Activated naive CD4-positive, alpha-beta T cell treated with anti-CD3 and anti-CD28 coated beads for 36 hours (primary cell): ENCODE measurements at regions of chr12 and their contacts with region 1.

Region 1: GRCh38 chr12:92570056-92570753 is 132.6 kb upstream of the PLEKHG7 start:
- DNase-seq: peak; percentile 67
- H3K4me3 Mint-ChIP-seq: no peak overlapping the region
- H3K27ac Mint-ChIP-seq: no peak overlapping the region
- H3K4me1 Mint-ChIP-seq: peaks cover 32% of the 10 kb centered on the region
- H3K27me3 Mint-ChIP-seq: no peaks in the 10 kb centered on the region

Region 2: DNA sequence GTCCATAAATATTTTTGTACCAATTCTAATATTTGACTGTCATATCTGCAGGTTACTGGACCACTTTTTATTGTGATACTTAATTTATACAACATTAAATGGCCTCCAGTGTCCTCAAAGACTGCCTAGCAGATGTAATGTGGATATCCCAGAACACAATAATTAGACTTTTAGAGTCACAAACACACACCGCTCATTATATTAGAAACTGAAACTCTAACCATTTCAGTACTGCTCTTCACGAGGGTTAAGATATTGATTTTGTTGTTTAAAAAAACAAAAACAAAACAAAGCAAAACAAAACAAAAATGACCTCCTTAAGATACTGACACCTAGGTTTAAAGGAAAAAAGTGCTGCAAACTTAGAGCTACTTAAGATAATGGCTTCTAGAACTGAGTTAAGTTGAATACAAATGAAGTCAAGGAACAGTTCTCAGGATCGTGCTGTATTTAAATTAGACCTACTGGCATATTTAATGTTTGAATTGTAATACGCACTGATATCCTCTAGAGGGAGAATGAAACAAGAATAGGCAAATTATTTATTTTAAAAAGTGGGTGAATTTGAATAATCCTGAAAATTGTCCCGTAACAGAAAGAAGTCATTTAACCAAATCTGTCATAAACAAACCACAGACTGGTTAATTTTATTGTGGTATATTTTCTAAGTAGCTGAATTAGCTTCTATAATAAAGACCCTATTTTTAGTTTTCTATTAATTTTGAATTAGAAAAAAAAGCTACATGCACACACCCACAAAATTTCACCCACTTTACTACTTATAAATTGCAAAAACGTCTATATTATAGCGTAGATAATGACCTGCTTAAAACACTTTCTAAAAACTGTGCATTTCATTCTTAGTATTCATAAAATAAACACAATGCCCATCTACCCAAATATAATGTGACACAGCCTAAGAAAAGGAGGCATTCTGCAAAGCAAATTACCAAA is 992.3 kb before region 1 on chr12:
- CTCF ChIA-PET with region 1: no interaction called
- intact Hi-C with region 1: loop called (anchors 1 kb)
- DNase-seq: no peak
- H3K4me3 Mint-ChIP-seq: peak overlapping the region; percentile 71
- H3K27ac Mint-ChIP-seq: peak overlapping the region; percentile 61
- H3K4me1 Mint-ChIP-seq: peaks cover 19% of the 10 kb centered on the region
- H3K27me3 Mint-ChIP-seq: no peaks in the 10 kb centered on the region

Region 3: DNA sequence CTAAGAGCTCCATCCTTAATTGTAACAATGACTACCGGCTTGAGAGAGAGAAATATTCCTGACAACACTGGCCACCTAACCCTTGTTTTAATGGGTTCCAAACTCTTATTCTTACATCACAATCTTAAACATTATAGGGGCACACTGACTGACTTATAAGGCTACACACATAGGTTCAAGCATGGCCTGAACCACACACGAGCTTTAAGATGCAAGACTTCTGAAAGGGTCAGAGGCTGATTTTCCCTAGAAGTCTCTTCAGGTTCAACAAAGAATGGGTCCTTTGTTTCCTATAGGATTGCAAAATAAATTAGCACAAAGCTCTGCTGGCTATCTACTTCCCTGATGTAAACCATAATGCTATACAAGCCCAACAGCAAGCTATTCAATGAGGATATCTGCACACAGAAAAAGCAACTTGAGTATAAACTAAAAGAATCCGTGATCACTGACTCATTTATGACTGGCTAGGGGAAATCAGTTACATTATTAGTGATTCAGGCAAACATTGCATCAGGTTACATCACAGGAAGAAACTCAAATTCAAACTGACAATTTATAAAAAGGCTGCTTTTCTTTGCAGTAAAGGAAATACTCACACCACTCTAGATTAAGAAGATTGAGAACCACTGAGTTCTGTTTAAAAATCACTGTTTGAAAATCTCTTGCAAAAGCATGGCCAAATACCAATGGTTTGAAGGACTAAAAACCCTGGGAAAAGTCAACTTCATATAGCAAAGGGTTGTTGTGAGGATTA is 433.1 kb before region 1 on chr12:
- CTCF ChIA-PET with region 1: interaction called, 3 read pairs
- intact Hi-C with region 1: loop called (anchors 2 kb)
- DNase-seq: no peak
- H3K4me3 Mint-ChIP-seq: peak overlapping the region; percentile 100
- H3K27ac Mint-ChIP-seq: peak overlapping the region; percentile 99
- H3K4me1 Mint-ChIP-seq: peaks cover 58% of the 10 kb centered on the region
- H3K27me3 Mint-ChIP-seq: no peaks in the 10 kb centered on the region

Region 4: DNA sequence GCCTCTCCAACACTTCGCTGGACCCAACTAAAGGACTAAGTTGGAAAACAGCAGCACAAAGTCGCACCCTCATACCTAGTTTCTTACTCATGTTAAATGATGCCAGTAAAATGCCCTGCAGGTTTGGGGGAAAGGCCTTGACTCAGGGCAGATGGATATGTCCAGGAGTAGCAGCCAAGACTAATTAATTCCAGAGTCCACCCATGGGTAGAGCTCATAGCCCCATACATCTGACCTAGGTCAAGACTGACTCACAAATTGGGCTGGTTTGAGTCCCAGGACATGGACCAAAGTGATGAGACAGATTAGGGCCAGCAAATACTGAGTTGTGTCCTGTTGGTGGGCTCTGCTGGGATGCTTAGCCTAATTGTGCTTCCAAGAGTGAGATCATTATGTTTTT is 200.6 kb before region 1 on chr12:
- CTCF ChIA-PET with region 1: no interaction called
- intact Hi-C with region 1: no loop called
- DNase-seq: no peak
- H3K4me3 Mint-ChIP-seq: no peak overlapping the region
- H3K27ac Mint-ChIP-seq: no peak overlapping the region
- H3K4me1 Mint-ChIP-seq: peaks cover 41% of the 10 kb centered on the region
- H3K27me3 Mint-ChIP-seq: no peaks in the 10 kb centered on the region

Region 5: GRCh38 chr12:92396647-92397252 is 173.5 kb before region 1 on chr12:
- CTCF ChIA-PET with region 1: interaction called, 4 read pairs
- intact Hi-C with region 1: loop called (anchors 1 kb)
- DNase-seq: peak; percentile 39
- H3K4me3 Mint-ChIP-seq: no peak overlapping the region
- H3K27ac Mint-ChIP-seq: peak overlapping the region; percentile 73
- H3K4me1 Mint-ChIP-seq: peaks cover 97% of the 10 kb centered on the region
- H3K27me3 Mint-ChIP-seq: no peaks in the 10 kb centered on the region

Region 6: GRCh38 chr12:92539113-92539749 is 31.0 kb before region 1 on chr12:
- CTCF ChIA-PET with region 1: no interaction called
- intact Hi-C with region 1: no loop called
- DNase-seq: peak; percentile 65
- H3K4me3 Mint-ChIP-seq: no peak overlapping the region
- H3K27ac Mint-ChIP-seq: peak overlapping the region; percentile 97
- H3K4me1 Mint-ChIP-seq: peaks cover 56% of the 10 kb centered on the region
- H3K27me3 Mint-ChIP-seq: no peaks in the 10 kb centered on the region

Region 7: GRCh38 chr12:92608151-92609091 is 38.2 kb after region 1 on chr12:
- CTCF ChIA-PET with region 1: interaction called, 15 read pairs
- intact Hi-C with region 1: loop called (anchors 1 kb)
- DNase-seq: no peak
- H3K4me3 Mint-ChIP-seq: no peak overlapping the region
- H3K27ac Mint-ChIP-seq: no peak overlapping the region
- H3K4me1 Mint-ChIP-seq: peaks cover 29% of the 10 kb centered on the region
- H3K27me3 Mint-ChIP-seq: no peaks in the 10 kb centered on the region

Region 8: GRCh38 chr12:93008044-93008778 is 438.0 kb after region 1 on chr12:
- CTCF ChIA-PET with region 1: no interaction called
- intact Hi-C with region 1: no loop called
- DNase-seq: no peak
- H3K4me3 Mint-ChIP-seq: no peak overlapping the region
- H3K27ac Mint-ChIP-seq: no peak overlapping the region
- H3K4me1 Mint-ChIP-seq: peaks cover 8% of the 10 kb centered on the region
- H3K27me3 Mint-ChIP-seq: no peaks in the 10 kb centered on the region